ENCODE measurements at regions of chr11 and their contacts with region 1.

Region 1: GRCh38 chr11:130827451-130828377 is 88.6 kb downstream of the SNX19 start:
- DNase-seq: peak; percentile 70 to 80
- ATAC-seq: peak; percentile 73 to 85 (median 80)
- H3K4me3 ChIP-seq: no peak overlapping the region
- H3K27ac ChIP-seq: no peak overlapping the region
- H3K4me1 ChIP-seq: peaks cover 47% of the 10 kb centered on the region
- H3K27me3 ChIP-seq: no peaks in the 10 kb centered on the region
- CTCF ChIP-seq: peak; percentile 30

Region 2: GRCh38 chr11:130671801-130672700 is 155.7 kb before region 1 on chr11:
- intact Hi-C with region 1: loop called in 1 of 2 experiments (anchors 10 kb)
- DNase-seq: peak; percentile 54 to 73
- ATAC-seq: peak; percentile 59 to 80 (median 62)
- H3K4me3 ChIP-seq: no peak overlapping the region
- H3K27ac ChIP-seq: no peak overlapping the region
- H3K4me1 ChIP-seq: peaks cover 44% of the 10 kb centered on the region
- H3K27me3 ChIP-seq: no peaks in the 10 kb centered on the region
- CTCF ChIP-seq: no peak